Endothelial cell of umbilical vein (primary cell): ENCODE measurements at regions of chr13 and their contacts with region 1.

Region 1: GRCh38 chr13:79393564-79394249 is 12.3 kb downstream of the RBM26 start:
- DNase-seq: peak; percentile 83
- H3K4me3 ChIP-seq: no peak overlapping the region
- H3K27ac ChIP-seq: peak overlapping the region; percentile 8
- H3K4me1 ChIP-seq: peaks cover 18% of the 10 kb centered on the region
- H3K27me3 ChIP-seq: no peaks in the 10 kb centered on the region
- CTCF ChIP-seq: no peak
- POLR2A ChIP-seq: no peak

Region 2: GRCh38 chr13:78317030-78317429 is 1076.7 kb before region 1 on chr13:
- CTCF ChIA-PET with region 1: no interaction called
- POLR2A ChIA-PET with region 1: no interaction called
- dilution Hi-C with region 1: no loop called
- intact Hi-C with region 1: loop called (anchors 2 kb)
- DNase-seq: no peak
- H3K4me3 ChIP-seq: no peak overlapping the region
- H3K27ac ChIP-seq: no peak overlapping the region
- H3K4me1 ChIP-seq: peaks cover 6% of the 10 kb centered on the region
- H3K27me3 ChIP-seq: no peaks in the 10 kb centered on the region
- CTCF ChIP-seq: peak in 1 of 2 donors; percentile 16
- POLR2A ChIP-seq: no peak

Region 3: GRCh38 chr13:78658635-78659449 is 734.9 kb before region 1 on chr13 and contains the start of gene OBI1:
- CTCF ChIA-PET with region 1: no interaction called
- POLR2A ChIA-PET with region 1: no interaction called
- dilution Hi-C with region 1: no loop called
- intact Hi-C with region 1: loop called (anchors 5 kb)
- DNase-seq: peak; percentile 91
- H3K4me3 ChIP-seq: peak within 1 kb of the TSS; percentile 50 to 97 (median 93)
- H3K27ac ChIP-seq: peak within 1 kb of the TSS; percentile 48
- H3K4me1 ChIP-seq: peaks cover 30% of the 10 kb centered on the region
- H3K27me3 ChIP-seq: no peaks in the 10 kb centered on the region
- CTCF ChIP-seq: no peak
- POLR2A ChIP-seq: peak; percentile 60
- total RNA-seq, gene OBI1: 14.6 and 16.1 TPM in 2 replicates

Region 4: GRCh38 chr13:79311386-79311785 is 82.3 kb before region 1 on chr13:
- CTCF ChIA-PET with region 1: interaction called, 6 read pairs
- POLR2A ChIA-PET with region 1: no interaction called
- dilution Hi-C with region 1: no loop called
- intact Hi-C with region 1: loop called (anchors 5 kb)
- DNase-seq: peak; percentile 72
- H3K4me3 ChIP-seq: no peak overlapping the region
- H3K27ac ChIP-seq: no peak overlapping the region
- H3K4me1 ChIP-seq: peaks cover 15% of the 10 kb centered on the region
- H3K27me3 ChIP-seq: peaks cover 3 to 4% of the 10 kb centered on the region in 2 experiments
- CTCF ChIP-seq: no peak
- POLR2A ChIP-seq: no peak

Region 5: GRCh38 chr13:79380997-79381396 is 12.7 kb before region 1 on chr13:
- CTCF ChIA-PET with region 1: interaction called, 11 read pairs
- POLR2A ChIA-PET with region 1: no interaction called
- dilution Hi-C with region 1: no loop called
- intact Hi-C with region 1: no loop called
- DNase-seq: no peak
- H3K4me3 ChIP-seq: no peak overlapping the region
- H3K27ac ChIP-seq: no peak overlapping the region
- H3K4me1 ChIP-seq: peaks cover 7% of the 10 kb centered on the region
- H3K27me3 ChIP-seq: no peaks in the 10 kb centered on the region
- CTCF ChIP-seq: no peak
- POLR2A ChIP-seq: no peak

Region 6: GRCh38 chr13:80121038-80121437 is 727.3 kb after region 1 on chr13:
- CTCF ChIA-PET with region 1: no interaction called
- POLR2A ChIA-PET with region 1: no interaction called
- dilution Hi-C with region 1: no loop called
- intact Hi-C with region 1: no loop called
- DNase-seq: no peak
- H3K4me3 ChIP-seq: no peak overlapping the region
- H3K27ac ChIP-seq: no peak overlapping the region
- H3K4me1 ChIP-seq: no peaks in the 10 kb centered on the region
- H3K27me3 ChIP-seq: no peaks in the 10 kb centered on the region
- CTCF ChIP-seq: no peak
- POLR2A ChIP-seq: no peak